Activated CD8-positive, alpha-beta T cell treated with anti-CD3 and anti-CD28 coated beads for 36 hours (primary cell): ENCODE measurements at regions of chr20 and their contacts with region 1.

Region 1: GRCh38 chr20:25390538-25391528 is at the start of gene ABHD12:
- DNase-seq: peak; percentile 96
- ATAC-seq: peak; percentile 97
- H3K4me3 Mint-ChIP-seq: peak within 1 kb of the TSS; percentile 87
- H3K27ac Mint-ChIP-seq: peak within 1 kb of the TSS; percentile 91
- H3K4me1 Mint-ChIP-seq: peaks cover 15% of the 10 kb centered on the region
- H3K27me3 Mint-ChIP-seq: no peaks in the 10 kb centered on the region
- CTCF ChIP-seq: no peak
- total RNA-seq, gene ABHD12: 16.0 to 17.0 TPM

Region 2: DNA sequence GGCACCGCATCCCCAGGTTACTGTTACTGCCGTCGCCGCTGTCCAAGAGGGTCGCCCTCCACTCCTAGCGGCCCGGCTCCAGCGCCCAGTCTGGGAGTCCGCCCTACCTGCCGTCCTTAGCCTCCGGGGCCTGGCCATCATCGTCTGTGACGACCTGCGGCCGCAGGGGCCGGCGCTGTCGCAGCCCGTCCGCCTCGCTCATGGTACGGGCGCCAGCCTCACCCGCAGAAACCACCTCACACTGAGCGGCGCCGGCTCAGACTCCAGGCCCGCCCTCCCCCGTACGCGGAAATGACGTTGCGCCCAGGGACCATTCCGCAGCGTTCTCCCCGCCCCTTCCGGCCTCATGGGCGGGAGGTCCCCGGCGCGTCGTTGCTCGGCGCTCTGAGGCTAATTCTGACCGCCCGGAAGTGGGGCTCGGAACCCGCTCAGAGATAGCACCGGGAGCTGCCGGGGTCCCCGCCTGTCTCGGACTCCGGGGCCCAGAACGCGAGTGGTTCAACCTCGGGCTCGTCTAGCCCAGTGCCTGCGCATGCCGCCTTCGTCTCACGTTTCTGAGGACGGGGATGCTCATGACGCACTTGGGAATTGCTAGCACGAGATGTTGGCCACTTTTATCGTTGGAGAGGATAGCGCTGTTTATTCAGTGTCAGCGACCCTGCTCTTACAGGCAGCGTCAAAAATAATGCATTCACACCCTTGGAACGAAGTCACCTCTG is 398.2 kb before region 1 on chr20 and contains the start of gene APMAP:
- CTCF ChIA-PET with region 1: no interaction called
- POLR2A ChIA-PET with region 1: no interaction called
- intact Hi-C with region 1: loop called (anchors 10 kb)
- DNase-seq: peak; percentile 98
- ATAC-seq: peak; percentile 95
- H3K4me3 Mint-ChIP-seq: peak within 1 kb of the TSS; percentile 97
- H3K27ac Mint-ChIP-seq: peak within 1 kb of the TSS; percentile 95
- H3K4me1 Mint-ChIP-seq: peaks cover 54% of the 10 kb centered on the region
- H3K27me3 Mint-ChIP-seq: no peaks in the 10 kb centered on the region
- CTCF ChIP-seq: no peak
- total RNA-seq, gene APMAP: 36.7 to 40.0 TPM

Region 3: DNA sequence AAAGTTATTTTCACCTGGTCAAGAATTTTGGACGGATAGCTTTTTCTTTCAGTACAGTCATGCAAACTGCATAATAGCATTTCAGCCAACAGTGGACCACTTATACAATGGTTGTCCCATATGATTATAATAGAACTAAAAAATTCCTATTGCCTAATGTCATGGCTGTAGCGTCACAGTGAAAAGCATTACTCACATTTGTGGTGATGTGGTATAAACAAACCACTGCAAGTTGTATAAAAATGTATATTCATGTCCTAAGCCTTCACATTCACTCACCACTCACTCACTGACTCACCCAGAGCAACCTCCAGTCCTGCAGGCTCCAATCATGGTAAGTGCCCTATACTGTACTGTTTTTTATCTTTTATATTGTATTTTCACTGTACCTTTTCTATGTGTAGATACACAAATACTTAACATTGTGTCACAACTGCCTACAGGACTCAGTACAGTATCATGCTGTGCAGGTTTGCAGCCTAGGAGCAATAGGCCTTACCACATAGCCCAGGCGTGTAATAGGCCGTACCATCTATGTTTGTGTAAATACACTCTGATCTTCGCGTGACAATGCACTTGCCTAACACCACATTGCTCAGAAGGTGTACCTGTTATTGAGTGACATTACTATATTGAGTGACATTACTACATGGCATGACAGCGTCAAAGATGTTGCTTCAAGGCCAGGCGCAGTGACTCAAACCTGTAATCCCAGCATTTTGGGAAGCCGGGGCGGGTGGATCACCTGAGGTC is 18.1 kb before region 1 on chr20:
- CTCF ChIA-PET with region 1: no interaction called
- POLR2A ChIA-PET with region 1: no interaction called
- intact Hi-C with region 1: no loop called
- DNase-seq: peak; percentile 16
- ATAC-seq: peak; percentile 78
- H3K4me3 Mint-ChIP-seq: no peak overlapping the region
- H3K27ac Mint-ChIP-seq: no peak overlapping the region
- H3K4me1 Mint-ChIP-seq: peaks cover 11% of the 10 kb centered on the region
- H3K27me3 Mint-ChIP-seq: no peaks in the 10 kb centered on the region
- CTCF ChIP-seq: no peak